HEK293 (cell line): ENCODE measurements at regions of chr11 and their contacts with region 1.

Region 1: GRCh38 chr11:20739107-20739506 is 69.7 kb downstream of the NELL1 start:
- H3K4me3 ChIP-seq: no peak overlapping the region
- H3K27ac ChIP-seq: no peak overlapping the region
- H3K4me1 ChIP-seq: no peaks in the 10 kb centered on the region
- CTCF ChIP-seq: no peak

Region 2: GRCh38 chr11:20658135-20658534 is 81.0 kb before region 1 on chr11:
- CTCF ChIA-PET with region 1: no interaction called
- POLR2A ChIA-PET with region 1: no interaction called
- H3K4me3 ChIP-seq: no peak overlapping the region
- H3K27ac ChIP-seq: no peak overlapping the region
- H3K4me1 ChIP-seq: no peaks in the 10 kb centered on the region
- CTCF ChIP-seq: no peak

Region 3: DNA sequence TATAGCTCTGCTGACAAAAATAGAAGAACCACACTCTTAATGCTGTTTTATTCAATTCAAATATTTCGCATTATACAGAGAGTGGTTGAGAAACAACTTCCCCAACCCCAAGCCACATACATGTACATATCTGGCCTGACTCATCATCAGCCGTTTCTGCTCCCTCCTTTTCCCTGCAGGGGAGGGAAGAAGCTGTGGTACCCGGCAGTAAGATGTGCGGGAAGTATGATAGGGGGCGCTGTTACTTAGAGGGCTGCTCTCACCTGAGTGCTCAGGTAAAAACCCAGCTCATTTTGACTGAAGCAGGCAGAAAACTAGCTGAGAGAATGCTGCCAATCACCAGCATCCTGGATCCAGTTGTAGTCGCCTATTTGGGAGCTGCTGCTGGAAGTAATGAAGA is 15.8 kb after region 1 on chr11:
- CTCF ChIA-PET with region 1: interaction called, 13 read pairs
- POLR2A ChIA-PET with region 1: no interaction called
- H3K4me3 ChIP-seq: no peak overlapping the region
- H3K27ac ChIP-seq: no peak overlapping the region
- H3K4me1 ChIP-seq: no peaks in the 10 kb centered on the region
- CTCF ChIP-seq: no peak